Ascending aorta (tissue), 2 donors: ENCODE measurements at regions of chr20 and their contacts with region 1.

Region 1: DNA sequence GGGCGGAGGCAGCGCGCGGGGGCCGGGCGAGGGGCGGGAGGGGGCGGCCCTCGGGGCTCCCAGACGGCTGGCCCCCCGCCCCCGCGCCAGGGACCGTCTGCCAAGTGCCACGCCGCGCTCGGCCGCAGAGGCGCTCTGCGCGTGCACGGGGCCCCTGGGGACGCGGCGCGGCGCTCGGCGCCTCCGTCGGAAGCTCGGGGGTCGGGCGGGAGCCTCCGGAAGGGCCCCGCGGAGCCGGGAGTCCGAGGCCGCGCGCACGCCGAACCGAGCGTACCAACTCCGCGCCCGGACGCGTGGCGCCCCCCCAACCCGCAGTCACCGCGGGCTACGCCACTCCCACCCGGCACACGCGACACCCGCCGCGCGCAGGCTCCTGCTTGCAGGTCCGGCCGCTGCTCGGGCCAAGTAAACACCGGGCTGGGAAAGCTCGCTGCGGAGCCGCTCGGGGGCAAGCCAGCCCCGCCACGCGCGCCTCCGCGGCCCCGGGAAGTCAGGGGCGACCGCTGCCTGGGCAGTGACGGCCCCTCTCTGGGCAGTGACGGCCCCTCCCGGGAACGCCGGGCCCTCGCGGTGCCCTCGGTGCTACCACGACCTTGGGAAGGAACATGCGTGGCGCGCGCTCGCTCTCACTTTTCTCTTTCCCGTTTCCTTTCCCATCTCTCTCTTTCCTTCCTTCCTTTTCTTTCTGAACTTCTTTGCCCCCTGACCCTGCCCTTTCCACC is 384 bp upstream of the PREX1 start:
- DNase-seq: peak; percentile 50 to 88
- H3K4me3 ChIP-seq: peak overlapping the region; percentile 75 to 88
- H3K27ac ChIP-seq: peak overlapping the region; percentile 47 to 76
- H3K4me1 ChIP-seq: peaks cover 9 to 29% of the 10 kb centered on the region in 2 donors
- H3K27me3 ChIP-seq: no peaks in the 10 kb centered on the region
- CTCF ChIP-seq: peak in 1 of 3 experiments; percentile 62

Region 2: DNA sequence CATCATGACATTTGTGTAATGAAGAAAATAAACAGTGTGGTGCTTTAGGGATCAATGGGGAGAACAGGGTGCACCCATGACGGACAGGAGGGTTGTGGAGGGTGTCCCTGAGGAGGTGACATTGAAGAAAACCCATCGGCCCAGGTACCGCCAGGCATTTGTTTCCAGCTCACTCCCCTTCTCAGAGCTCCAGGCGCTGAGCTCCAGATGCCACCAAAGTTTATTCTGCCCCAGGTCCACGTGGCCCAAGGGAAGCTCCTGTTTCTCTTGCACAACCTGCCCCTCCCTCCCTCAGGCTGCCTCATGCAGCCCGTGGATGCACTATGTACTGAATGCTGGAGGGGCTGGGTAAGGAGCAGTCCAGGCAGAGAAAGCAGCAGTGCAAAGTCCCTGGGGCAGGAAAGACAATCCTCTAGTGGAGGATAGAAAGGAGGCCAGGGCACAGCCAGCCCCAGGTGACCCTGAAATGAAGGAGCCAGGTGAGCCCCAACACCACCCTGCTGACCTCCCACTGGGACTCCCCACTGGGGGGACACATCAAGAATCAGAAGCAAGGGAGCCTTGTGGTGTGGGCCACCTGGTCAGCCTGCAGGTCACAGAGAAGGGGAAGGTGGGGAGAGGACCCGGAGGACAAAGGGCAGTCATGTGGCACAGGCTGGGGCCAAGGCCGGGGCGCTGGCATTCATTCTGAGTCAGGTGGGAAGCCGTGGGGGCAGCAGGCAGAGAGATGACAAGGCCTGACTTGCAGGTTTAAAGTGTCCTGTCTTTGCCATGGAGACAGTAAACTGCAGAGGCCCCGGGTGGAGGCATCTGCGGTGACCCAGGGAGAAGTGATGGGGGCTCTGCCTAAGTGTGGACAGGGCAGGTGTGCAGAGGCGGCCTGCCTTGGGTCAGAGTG is 230.5 kb before region 1 on chr20:
- intact Hi-C with region 1: no loop called
- DNase-seq: peak in 1 of 2 donors; percentile 57
- H3K4me3 ChIP-seq: no peak overlapping the region
- H3K27ac ChIP-seq: no peak overlapping the region
- H3K4me1 ChIP-seq: no peaks in the 10 kb centered on the region
- H3K27me3 ChIP-seq: no peaks in the 10 kb centered on the region
- CTCF ChIP-seq: no peak

Region 3: DNA sequence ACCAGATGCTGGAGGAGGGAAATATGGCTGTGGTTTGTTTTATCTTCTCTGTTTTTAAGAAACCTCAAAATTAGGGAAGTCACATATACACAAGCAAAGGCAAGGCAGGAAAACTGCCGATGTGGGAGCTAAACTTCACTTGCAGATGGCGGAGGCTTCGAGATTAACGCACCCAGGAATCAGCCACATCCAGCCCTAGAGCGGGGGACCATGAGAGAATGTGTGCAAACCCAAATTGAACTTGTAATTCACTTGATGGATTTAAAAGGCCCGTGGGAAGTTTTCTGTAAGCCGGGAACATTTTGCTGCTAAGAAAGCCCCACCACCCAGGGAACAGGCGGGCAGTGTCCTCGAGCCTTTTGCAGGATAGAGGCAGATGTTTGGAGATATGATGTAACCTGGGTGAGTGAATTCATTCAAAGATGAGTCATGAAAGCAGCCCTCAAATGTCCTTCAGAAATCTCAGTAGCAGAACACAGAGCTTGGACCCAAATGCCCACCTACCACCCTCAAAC is 40.3 kb before region 1 on chr20:
- intact Hi-C with region 1: loop called (anchors 2 kb)
- DNase-seq: no peak
- H3K4me3 ChIP-seq: no peak overlapping the region
- H3K27ac ChIP-seq: no peak overlapping the region
- H3K4me1 ChIP-seq: peaks cover 18 to 34% of the 10 kb centered on the region in 2 donors
- H3K27me3 ChIP-seq: no peaks in the 10 kb centered on the region
- CTCF ChIP-seq: no peak

Region 4: GRCh38 chr20:48904365-48905296 is 76.4 kb after region 1 on chr20:
- intact Hi-C with region 1: loop called (anchors 5 kb)
- DNase-seq: peak in 1 of 2 donors; percentile 78
- H3K4me3 ChIP-seq: no peak overlapping the region
- H3K27ac ChIP-seq: no peak overlapping the region
- H3K4me1 ChIP-seq: peaks cover 3 to 4% of the 10 kb centered on the region in 2 donors
- H3K27me3 ChIP-seq: no peaks in the 10 kb centered on the region
- CTCF ChIP-seq: peak; percentile 69 to 87 (median 81)

Region 5: GRCh38 chr20:48921151-48921898 is 93.1 kb after region 1 on chr20 and contains the start of gene ARFGEF2:
- intact Hi-C with region 1: loop called (anchors 5 kb)
- DNase-seq: peak; percentile 73 to 95
- H3K4me3 ChIP-seq: peak within 1 kb of the TSS; percentile 91 to 99
- H3K27ac ChIP-seq: peak within 1 kb of the TSS; percentile 89 to 96
- H3K4me1 ChIP-seq: peaks cover 12 to 28% of the 10 kb centered on the region in 2 donors
- H3K27me3 ChIP-seq: no peaks in the 10 kb centered on the region
- CTCF ChIP-seq: peak in 2 of 3 experiments; percentile 13 to 36
- total RNA-seq, gene ARFGEF2: 7.9 TPM